ENCODE measurements at regions of chr1 and their contacts with region 1.

Region 1: DNA sequence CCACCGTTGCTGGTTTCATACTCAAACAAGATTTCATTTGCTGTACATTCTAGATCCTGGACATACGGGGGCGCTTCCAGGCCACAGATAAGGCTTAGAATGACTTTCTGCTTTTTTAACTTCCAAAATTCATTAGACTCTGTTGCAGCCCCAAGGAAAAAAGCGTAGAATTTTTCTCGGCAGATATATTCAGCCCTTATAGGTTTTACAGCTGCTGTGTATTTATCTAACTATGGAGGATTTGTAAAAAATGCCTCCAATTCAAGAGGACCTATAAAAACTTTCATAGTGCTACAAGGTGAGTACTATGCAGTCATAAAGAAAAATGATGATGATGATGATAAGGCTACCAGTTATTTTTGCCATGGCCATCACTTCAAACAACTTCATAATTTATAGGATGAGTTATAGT is 51.6 kb downstream of the SLC30A10 start:
- DNase-seq: peak in 1 of 2 experiments; percentile 13
- H3K4me3 ChIP-seq: no peak overlapping the region
- H3K4me3 Mint-ChIP-seq: no peak overlapping the region
- H3K27ac Mint-ChIP-seq: no peak overlapping the region
- H3K4me1 ChIP-seq: no peaks in the 10 kb centered on the region
- H3K4me1 Mint-ChIP-seq: peaks cover 6% of the 10 kb centered on the region
- H3K27me3 ChIP-seq: no peaks in the 10 kb centered on the region
- H3K27me3 Mint-ChIP-seq: peaks cover 3% of the 10 kb centered on the region
- CTCF ChIP-seq: peak; percentile 43 to 61

Region 2: GRCh38 chr1:219837274-219837993 is 39.4 kb before region 1 on chr1:
- CTCF ChIA-PET with region 1: no interaction called
- POLR2A ChIA-PET with region 1: no interaction called
- intact Hi-C with region 1: loop called (anchors 5 kb)
- DNase-seq: peak in 1 of 2 experiments; percentile 63
- H3K4me3 ChIP-seq: no peak overlapping the region
- H3K4me3 Mint-ChIP-seq: no peak overlapping the region
- H3K27ac Mint-ChIP-seq: no peak overlapping the region
- H3K4me1 ChIP-seq: peaks cover 3% of the 10 kb centered on the region; the same call in 1 of the 2 replicates
- H3K4me1 Mint-ChIP-seq: peaks cover 6% of the 10 kb centered on the region
- H3K27me3 ChIP-seq: no peaks in the 10 kb centered on the region
- H3K27me3 Mint-ChIP-seq: peaks cover 15% of the 10 kb centered on the region
- CTCF ChIP-seq: peak; percentile 54 to 65

Region 3: GRCh38 chr1:219965285-219966070 is 88.7 kb after region 1 on chr1:
- CTCF ChIA-PET with region 1: no interaction called
- POLR2A ChIA-PET with region 1: no interaction called
- intact Hi-C with region 1: loop called (anchors 2 kb)
- DNase-seq: no peak
- H3K4me3 ChIP-seq: no peak overlapping the region
- H3K4me3 Mint-ChIP-seq: no peak overlapping the region
- H3K27ac Mint-ChIP-seq: no peak overlapping the region
- H3K4me1 ChIP-seq: peaks cover 8% of the 10 kb centered on the region
- H3K4me1 Mint-ChIP-seq: no peaks in the 10 kb centered on the region
- H3K27me3 ChIP-seq: no peaks in the 10 kb centered on the region
- H3K27me3 Mint-ChIP-seq: no peaks in the 10 kb centered on the region
- CTCF ChIP-seq: no peak

Region 4: GRCh38 chr1:220487297-220487820 is 610.6 kb after region 1 on chr1:
- CTCF ChIA-PET with region 1: no interaction called
- POLR2A ChIA-PET with region 1: no interaction called
- intact Hi-C with region 1: no loop called
- DNase-seq: peak in 1 of 2 experiments; percentile 43
- H3K4me3 ChIP-seq: no peak overlapping the region
- H3K4me3 Mint-ChIP-seq: no peak overlapping the region
- H3K27ac Mint-ChIP-seq: no peak overlapping the region
- H3K4me1 ChIP-seq: peaks cover 5% of the 10 kb centered on the region; the same call in 1 of the 2 replicates
- H3K4me1 Mint-ChIP-seq: peaks cover 21% of the 10 kb centered on the region
- H3K27me3 ChIP-seq: no peaks in the 10 kb centered on the region
- H3K27me3 Mint-ChIP-seq: peaks cover 5% of the 10 kb centered on the region
- CTCF ChIP-seq: no peak